ENCODE measurements at regions of chr9 and their contacts with region 1.

Region 1: GRCh38 chr9:136978073-136978864 is 965 bp downstream of the PTGDS start:
- DNase-seq: peak; percentile 83
- ATAC-seq: peak; percentile 63
- H3K4me3 Mint-ChIP-seq: no peak overlapping the region
- H3K27ac Mint-ChIP-seq: no peak overlapping the region
- H3K4me1 Mint-ChIP-seq: peaks cover 15% of the 10 kb centered on the region
- H3K27me3 Mint-ChIP-seq: peaks cover 5% of the 10 kb centered on the region

Region 2: DNA sequence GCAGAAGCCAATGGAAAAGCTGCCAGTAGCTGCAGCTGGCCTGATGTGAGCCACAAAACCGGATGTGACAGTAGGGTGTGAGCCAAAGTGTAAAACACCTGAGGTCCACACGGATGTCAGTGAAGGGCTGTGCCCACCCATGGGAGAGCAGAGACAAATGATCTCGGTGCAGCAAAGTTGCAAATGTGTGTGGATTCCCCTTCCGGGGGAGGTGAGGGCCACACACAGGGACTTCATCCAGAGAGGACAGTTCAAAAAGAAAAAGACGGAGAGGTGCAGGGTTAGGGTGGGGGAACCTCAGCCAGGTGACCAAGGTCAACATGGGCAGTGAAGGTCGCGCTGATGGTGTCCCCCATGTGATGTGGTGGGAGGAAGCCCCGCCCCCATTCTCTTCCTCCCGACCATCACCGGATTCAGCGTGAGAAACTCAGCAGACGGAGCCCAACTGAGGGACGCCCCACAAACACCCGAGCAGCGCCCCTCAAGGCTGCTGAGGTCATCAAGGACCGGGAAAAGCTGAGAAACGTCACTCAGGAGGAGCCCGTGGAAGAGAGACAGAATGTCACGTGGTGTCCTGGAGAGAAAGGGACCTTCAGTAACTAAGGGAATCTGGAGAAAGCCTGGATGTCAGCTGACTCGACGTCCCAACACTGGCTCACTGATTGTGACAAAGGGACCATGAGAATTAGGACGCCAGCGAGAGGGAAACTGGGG is 12.3 kb before region 1 on chr9:
- CTCF ChIA-PET with region 1: interaction called, 13 read pairs
- DNase-seq: peak; percentile 81
- ATAC-seq: peak; percentile 72
- H3K4me3 Mint-ChIP-seq: peak overlapping the region; percentile 58
- H3K27ac Mint-ChIP-seq: peak overlapping the region; percentile 86
- H3K4me1 Mint-ChIP-seq: peaks cover 36% of the 10 kb centered on the region
- H3K27me3 Mint-ChIP-seq: no peaks in the 10 kb centered on the region

Region 3: DNA sequence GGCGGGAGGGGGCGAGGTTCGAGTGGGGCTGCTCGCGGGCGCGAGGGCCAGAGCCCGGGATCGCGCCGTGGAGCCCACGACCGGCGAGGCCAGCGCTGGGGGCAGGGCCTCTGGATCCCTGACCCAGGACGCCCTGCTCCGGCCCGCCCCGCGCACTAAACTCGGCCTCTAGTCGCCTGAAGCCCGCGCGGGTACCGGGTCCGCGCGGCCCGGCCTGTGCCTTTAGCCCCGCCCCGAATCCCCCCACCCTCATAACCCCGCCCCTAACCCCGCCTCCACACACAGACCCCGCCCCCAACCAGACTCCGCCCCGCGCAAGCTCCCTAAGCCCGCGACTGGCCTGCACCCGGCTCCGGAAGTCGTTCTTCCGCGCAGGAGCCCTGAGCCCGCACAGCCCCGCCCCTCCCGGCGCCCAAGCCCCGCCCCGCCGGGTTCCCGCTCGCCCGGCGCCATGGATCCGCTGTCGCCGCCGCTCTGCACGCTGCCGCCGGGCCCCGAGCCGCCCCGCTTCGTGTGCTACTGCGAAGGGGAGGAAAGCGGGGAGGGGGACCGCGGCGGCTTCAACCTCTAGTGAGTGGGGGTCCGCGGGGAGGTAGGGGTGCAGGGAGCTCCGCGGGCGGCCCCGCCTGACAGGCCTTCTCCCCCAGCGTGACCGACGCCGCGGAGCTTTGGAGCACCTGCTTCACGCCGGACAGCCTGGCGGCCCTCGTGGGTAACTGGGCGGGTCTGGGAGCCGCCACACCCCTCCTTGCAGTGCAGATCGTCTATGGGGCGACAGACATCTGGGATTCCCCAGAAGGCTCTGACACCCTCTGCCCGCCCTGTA is 13.9 kb after region 1 on chr9 and contains the start of gene PAXX:
- CTCF ChIA-PET with region 1: interaction called, 19 read pairs
- DNase-seq: peak; percentile 96
- ATAC-seq: peak; percentile 88
- H3K4me3 Mint-ChIP-seq: peak within 1 kb of the TSS; percentile 84
- H3K27ac Mint-ChIP-seq: peak within 1 kb of the TSS; percentile 82
- H3K4me1 Mint-ChIP-seq: peaks cover 32% of the 10 kb centered on the region
- H3K27me3 Mint-ChIP-seq: peaks cover 9% of the 10 kb centered on the region
- total RNA-seq, gene PAXX: 68.6 to 94.8 TPM

Region 4: DNA sequence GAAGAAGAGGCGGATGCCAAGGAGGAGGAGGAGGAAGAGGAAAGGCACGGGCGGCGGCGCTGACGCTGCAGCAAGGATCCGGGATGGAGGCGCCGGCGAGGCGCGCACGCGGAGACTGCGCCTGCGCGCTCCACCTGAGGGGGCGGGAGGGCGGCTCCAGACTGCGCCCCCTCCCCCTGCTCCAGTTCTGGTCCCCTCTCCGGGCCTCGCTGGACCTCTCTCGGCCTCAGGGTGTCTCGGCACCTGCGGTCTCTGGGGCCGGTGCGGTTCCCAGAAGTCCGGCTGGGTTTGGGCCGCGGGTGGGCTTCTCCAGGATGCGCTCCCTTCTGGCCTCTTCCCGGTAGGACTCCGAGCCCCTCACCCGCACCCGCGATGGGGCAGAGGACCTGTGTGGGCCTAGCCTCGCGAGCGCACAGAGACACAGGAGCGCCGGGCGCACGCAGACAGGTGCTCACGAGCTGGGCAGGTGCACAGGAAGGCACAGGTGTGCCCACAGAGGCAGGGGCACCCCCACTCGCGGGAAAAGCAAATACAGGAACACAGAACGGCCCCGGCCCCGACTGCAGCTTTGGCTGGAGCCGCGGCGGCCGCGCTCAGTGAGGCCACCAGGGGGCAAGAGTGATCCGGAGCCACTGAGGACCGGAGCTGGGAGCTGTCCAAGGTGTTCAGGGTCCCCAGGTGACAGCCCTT is 68.0 kb after region 1 on chr9 and contains the start of gene NPDC1:
- CTCF ChIA-PET with region 1: interaction called, 10 read pairs
- DNase-seq: peak; percentile 89
- ATAC-seq: peak; percentile 82
- H3K4me3 Mint-ChIP-seq: peak within 1 kb of the TSS; percentile 71
- H3K27ac Mint-ChIP-seq: no peak within 1 kb of the TSS
- H3K4me1 Mint-ChIP-seq: peaks cover 16% of the 10 kb centered on the region
- H3K27me3 Mint-ChIP-seq: peaks cover 43% of the 10 kb centered on the region
- total RNA-seq, gene NPDC1: 30.4 to 55.6 TPM

Measured in activated CD8-positive, alpha-beta memory T cell treated with anti-CD3 and anti-CD28 coated beads, Interleukin-2, amount 10 ng/mL, durations not matched to agents 7 days and 5 days (primary cell).